ENCODE measurements at regions of chr3 and their contacts with region 1.

Region 1: GRCh38 chr3:128145337-128145736 is 7.9 kb upstream of the EEFSEC start:
- DNase-seq: no peak
- H3K4me3 ChIP-seq: no peak overlapping the region
- H3K27ac ChIP-seq: no peak overlapping the region
- H3K4me1 ChIP-seq: peaks cover 0 to 5% of the 10 kb centered on the region in 2 experiments; a peak in 1 of 4 replicates
- H3K27me3 ChIP-seq: no peaks in the 10 kb centered on the region
- CTCF ChIP-seq: no peak
- EP300 ChIP-seq: no peak
- RAD21 ChIP-seq: no peak

Region 2: GRCh38 chr3:128133273-128134084 is 11.9 kb before region 1 on chr3:
- CTCF ChIA-PET with region 1: interaction called, 12 read pairs
- POLR2A ChIA-PET with region 1: no interaction called
- DNase-seq: peak; percentile 44
- H3K4me3 ChIP-seq: no peak overlapping the region
- H3K27ac ChIP-seq: no peak overlapping the region
- H3K4me1 ChIP-seq: no peaks in the 10 kb centered on the region
- H3K27me3 ChIP-seq: no peaks in the 10 kb centered on the region
- CTCF ChIP-seq: peak; percentile 83
- EP300 ChIP-seq: no peak
- RAD21 ChIP-seq: peak; percentile 90

Measured in SK-N-SH (cell line).